Astrocyte of the cerebellum (primary cell): ENCODE measurements at regions of chr7 and their contacts with region 1.

Region 1: GRCh38 chr7:140003913-140004382 is 58.8 kb downstream of the PARP12 start:
- DNase-seq: peak; percentile 62
- H3K4me3 ChIP-seq: no peak overlapping the region
- CTCF ChIP-seq: peak; percentile 60

Region 2: GRCh38 chr7:139494835-139495579 is 508.9 kb before region 1 on chr7:
- in situ Hi-C with region 1: loop called (anchors 5 kb)
- DNase-seq: no peak
- H3K4me3 ChIP-seq: no peak overlapping the region
- CTCF ChIP-seq: no peak

Region 3: GRCh38 chr7:139620676-139621344 is 383.1 kb before region 1 on chr7:
- in situ Hi-C with region 1: loop called (anchors 25 kb)
- DNase-seq: no peak
- H3K4me3 ChIP-seq: no peak overlapping the region
- CTCF ChIP-seq: peak; percentile 80

Region 4: GRCh38 chr7:139767561-139767982 is 236.4 kb before region 1 on chr7:
- in situ Hi-C with region 1: loop called (anchors 25 kb)
- DNase-seq: no peak
- H3K4me3 ChIP-seq: no peak overlapping the region
- CTCF ChIP-seq: no peak

Region 5: GRCh38 chr7:139960157-139960556 is 43.8 kb before region 1 on chr7:
- in situ Hi-C with region 1: no loop called
- DNase-seq: no peak
- H3K4me3 ChIP-seq: no peak overlapping the region
- CTCF ChIP-seq: no peak